ENCODE measurements at regions of chr14 and their contacts with region 1.

Region 1: DNA sequence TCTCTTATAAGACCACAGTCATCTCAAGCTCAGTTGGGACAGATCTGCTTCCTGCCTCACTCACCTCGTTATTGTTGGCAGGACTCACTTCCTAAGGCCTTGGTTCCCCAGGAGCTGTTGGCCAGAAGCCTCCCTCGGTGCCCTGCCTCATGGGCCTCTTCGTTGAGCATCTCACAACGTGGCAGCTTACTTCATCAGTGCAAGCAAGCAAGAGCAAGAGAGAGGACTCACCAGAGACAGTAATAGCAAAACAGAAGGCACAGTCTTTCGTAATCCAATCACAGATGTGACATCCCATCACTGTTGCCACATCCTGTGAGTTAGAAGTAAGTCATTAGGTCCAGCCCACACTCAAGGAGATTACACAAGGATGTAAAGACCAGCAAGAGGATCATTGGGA is 5.1 kb upstream of the NUMB start:
- DNase-seq: peak; percentile 79
- H3K4me3 Mint-ChIP-seq: peak overlapping the region; percentile 70
- H3K27ac Mint-ChIP-seq: peak overlapping the region; percentile 94
- H3K4me1 Mint-ChIP-seq: peaks cover 71% of the 10 kb centered on the region
- H3K27me3 Mint-ChIP-seq: no peaks in the 10 kb centered on the region

Region 2: DNA sequence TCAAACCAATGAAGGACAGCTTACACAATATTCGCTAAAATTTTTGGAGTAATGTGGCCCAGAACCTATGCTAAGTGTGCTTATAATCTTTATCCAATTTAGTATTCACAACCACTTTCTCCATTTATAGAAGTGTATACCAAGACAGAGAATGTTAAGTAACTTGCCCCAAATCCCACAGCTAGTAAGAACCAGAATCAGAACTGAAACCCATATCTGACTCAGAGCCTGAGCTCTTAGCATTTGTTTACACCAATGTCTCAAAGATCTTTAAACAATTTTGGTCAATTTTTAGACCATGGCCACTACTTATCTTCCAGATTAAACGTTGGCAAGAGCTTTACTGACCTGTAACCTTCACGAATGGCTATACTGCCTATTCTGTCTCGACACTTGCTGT is 173.1 kb before region 1 on chr14:
- intact Hi-C with region 1: loop called (anchors 2 kb)
- DNase-seq: no peak
- H3K4me3 Mint-ChIP-seq: peak overlapping the region; percentile 44
- H3K27ac Mint-ChIP-seq: peak overlapping the region; percentile 78
- H3K4me1 Mint-ChIP-seq: peaks cover 36% of the 10 kb centered on the region
- H3K27me3 Mint-ChIP-seq: no peaks in the 10 kb centered on the region

Region 3: GRCh38 chr14:73339846-73340595 is 123.4 kb before region 1 on chr14:
- intact Hi-C with region 1: no loop called
- DNase-seq: no peak
- H3K4me3 Mint-ChIP-seq: no peak overlapping the region
- H3K27ac Mint-ChIP-seq: no peak overlapping the region
- H3K4me1 Mint-ChIP-seq: no peaks in the 10 kb centered on the region
- H3K27me3 Mint-ChIP-seq: no peaks in the 10 kb centered on the region

Region 4: DNA sequence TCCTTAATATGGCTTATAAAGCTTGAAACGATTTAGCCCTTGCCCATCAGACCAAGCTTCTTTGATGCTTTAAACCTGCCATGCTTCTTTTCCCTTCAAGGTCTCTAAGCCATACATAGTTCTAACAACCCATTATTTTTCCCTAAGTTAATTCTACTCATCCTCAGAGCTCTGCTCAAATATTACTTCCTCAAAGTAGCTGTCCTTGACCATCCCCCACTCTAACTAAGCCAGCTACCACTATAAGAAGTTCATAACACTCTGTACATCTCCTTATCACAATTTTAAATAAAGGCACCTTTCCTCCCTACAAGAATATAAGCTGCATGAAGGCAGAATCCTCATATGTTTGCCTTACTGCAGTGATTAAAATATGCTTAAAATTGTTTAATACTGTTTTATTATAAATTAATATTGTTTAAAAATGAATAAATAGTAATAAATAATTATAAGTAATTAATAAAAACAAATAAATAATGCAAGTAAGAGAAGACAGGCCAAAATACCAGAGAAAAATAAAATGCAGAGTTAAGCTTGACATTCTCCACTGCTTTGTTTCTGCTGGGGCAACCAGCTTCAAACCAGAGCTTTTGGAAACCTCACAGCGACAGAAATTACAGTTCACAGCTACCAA is 81.9 kb before region 1 on chr14:
- intact Hi-C with region 1: no loop called
- DNase-seq: no peak
- H3K4me3 Mint-ChIP-seq: no peak overlapping the region
- H3K27ac Mint-ChIP-seq: no peak overlapping the region
- H3K4me1 Mint-ChIP-seq: peaks cover 1% of the 10 kb centered on the region
- H3K27me3 Mint-ChIP-seq: no peaks in the 10 kb centered on the region

Region 5: GRCh38 chr14:73392329-73393257 is 70.8 kb before region 1 on chr14:
- intact Hi-C with region 1: loop called (anchors 5 kb)
- DNase-seq: no peak
- H3K4me3 Mint-ChIP-seq: no peak overlapping the region
- H3K27ac Mint-ChIP-seq: peak overlapping the region; percentile 14
- H3K4me1 Mint-ChIP-seq: peaks cover 10% of the 10 kb centered on the region
- H3K27me3 Mint-ChIP-seq: no peaks in the 10 kb centered on the region

Region 6: GRCh38 chr14:73610687-73611086 is 147.3 kb after region 1 on chr14:
- intact Hi-C with region 1: no loop called
- DNase-seq: no peak
- H3K4me3 Mint-ChIP-seq: no peak overlapping the region
- H3K27ac Mint-ChIP-seq: no peak overlapping the region
- H3K4me1 Mint-ChIP-seq: peaks cover 8% of the 10 kb centered on the region
- H3K27me3 Mint-ChIP-seq: peaks cover 8% of the 10 kb centered on the region

Region 7: GRCh38 chr14:73997108-73997943 is 533.9 kb after region 1 on chr14:
- intact Hi-C with region 1: no loop called
- DNase-seq: no peak
- H3K4me3 Mint-ChIP-seq: no peak overlapping the region
- H3K27ac Mint-ChIP-seq: no peak overlapping the region
- H3K4me1 Mint-ChIP-seq: no peaks in the 10 kb centered on the region
- H3K27me3 Mint-ChIP-seq: no peaks in the 10 kb centered on the region